ENCODE measurements at regions of chrX and their contacts with region 1.

Region 1: DNA sequence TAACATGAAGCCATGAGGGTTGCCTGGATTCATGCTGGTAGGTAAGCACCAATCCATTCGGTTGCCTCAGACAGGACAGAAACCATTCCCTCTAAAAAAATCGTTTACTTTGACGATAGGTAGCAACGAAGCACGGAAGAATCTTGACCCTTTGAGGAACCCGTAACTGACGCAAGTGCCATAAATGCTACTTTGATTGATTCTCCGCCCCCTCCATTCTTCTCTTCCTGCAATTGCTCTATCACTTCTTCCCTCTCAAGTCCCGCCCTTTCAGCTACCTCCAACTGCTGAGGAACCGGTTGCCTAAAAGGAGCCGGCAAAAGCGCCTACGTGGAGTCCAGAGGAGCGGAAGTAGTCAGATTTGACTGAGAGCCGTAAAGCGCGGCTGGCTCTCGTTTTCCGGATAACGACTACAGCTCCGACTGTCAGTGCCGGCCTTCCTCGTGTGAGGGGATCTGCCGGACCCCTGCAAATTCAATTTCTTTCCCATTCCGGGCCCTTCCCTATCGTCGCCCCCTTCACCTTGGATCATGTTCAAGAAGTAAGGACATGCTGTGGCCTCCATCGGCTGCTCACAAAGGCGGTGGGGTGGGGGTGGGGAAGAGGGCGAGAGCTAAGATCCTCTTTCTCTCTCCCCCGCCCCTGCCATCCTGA is at the start of gene MCTS1:
- DNase-seq: peak; percentile 94
- H3K4me3 ChIP-seq: peak within 1 kb of the TSS; percentile 76 to 83 (median 79)
- H3K27ac ChIP-seq: peak within 1 kb of the TSS; percentile 72
- H3K4me1 ChIP-seq: peaks cover 10% of the 10 kb centered on the region
- H3K27me3 ChIP-seq: no peaks in the 10 kb centered on the region
- CTCF ChIP-seq: no peak
- POLR2A ChIP-seq: no peak
- total RNA-seq, gene MCTS1: 63.2 and 70.0 TPM in 2 replicates

Region 2: DNA sequence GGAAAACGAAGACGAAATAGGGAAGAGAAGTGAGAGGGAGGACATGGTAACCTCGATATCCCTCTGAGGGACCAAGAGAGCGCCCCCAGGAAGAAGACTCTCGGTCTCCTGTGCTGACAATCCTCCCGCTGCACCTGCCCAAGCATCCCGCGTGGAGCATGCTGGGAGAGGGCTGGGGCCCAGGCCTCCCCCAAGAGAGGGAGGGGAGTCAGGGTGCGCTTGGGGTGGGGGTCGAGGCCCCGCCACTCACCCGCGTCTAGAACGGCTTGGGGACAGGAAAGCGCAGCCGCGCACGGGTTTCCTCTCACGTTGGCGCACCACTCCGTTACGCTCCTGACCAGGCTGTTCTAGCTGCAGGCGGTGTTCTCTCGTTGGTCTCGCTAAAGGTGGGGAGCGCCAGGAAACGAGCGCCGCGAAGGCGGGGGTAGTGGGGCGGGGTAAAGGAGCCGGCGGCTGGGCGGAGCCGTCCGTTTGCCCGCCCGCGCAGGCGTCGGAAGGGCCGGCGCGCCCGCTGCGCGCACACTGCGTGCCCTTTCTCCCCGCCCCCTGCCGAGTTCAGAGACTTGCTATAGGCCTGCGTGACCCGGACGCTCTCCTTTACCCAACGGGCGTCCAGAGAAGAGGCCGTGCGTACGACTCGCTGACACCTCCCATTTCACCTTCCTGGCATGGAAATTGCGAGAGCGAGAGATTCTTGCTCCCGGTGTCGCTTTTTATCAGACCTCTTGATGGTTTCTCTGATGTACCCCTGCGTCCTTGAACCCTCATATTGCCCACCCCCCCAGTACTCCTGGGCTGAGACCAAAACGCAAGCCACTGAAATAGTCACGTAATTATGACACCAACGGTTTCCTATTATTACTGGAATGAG is 26.1 kb after region 1 on chrX and contains the start of gene C1GALT1C1:
- CTCF ChIA-PET with region 1: no interaction called
- POLR2A ChIA-PET with region 1: interaction called, 3 read pairs
- dilution Hi-C with region 1: no loop called
- intact Hi-C with region 1: loop called (anchors 2 kb)
- DNase-seq: peak; percentile 93
- H3K4me3 ChIP-seq: peak within 1 kb of the TSS; percentile 62 to 89 (median 85)
- H3K27ac ChIP-seq: peak within 1 kb of the TSS; percentile 68
- H3K4me1 ChIP-seq: peaks cover 3% of the 10 kb centered on the region
- H3K27me3 ChIP-seq: no peaks in the 10 kb centered on the region
- CTCF ChIP-seq: no peak
- POLR2A ChIP-seq: peak; percentile 82
- total RNA-seq, gene C1GALT1C1: 32.9 and 34.6 TPM in 2 replicates

Region 3: DNA sequence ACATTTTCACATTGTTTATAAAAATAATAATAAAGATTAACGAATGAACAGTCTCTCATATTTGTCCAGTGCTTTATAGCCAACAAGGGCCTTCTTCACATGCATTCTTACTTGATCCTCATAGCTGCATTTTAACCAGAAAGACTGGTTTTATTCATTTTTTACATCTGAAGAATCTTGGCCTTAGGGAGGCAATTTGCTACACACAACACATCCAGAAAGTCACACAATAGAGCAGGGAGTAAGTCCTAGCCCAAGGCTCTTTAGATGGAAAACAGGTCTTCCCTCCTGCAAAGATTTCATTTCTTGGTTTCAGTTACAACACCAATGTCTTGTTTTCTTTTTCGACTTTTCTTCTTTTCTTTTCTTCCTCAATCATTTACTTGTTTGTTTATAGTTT is 39.0 kb after region 1 on chrX:
- CTCF ChIA-PET with region 1: no interaction called
- POLR2A ChIA-PET with region 1: no interaction called
- dilution Hi-C with region 1: no loop called
- intact Hi-C with region 1: no loop called
- DNase-seq: no peak
- H3K4me3 ChIP-seq: no peak overlapping the region
- H3K27ac ChIP-seq: no peak overlapping the region
- H3K4me1 ChIP-seq: peaks cover 9% of the 10 kb centered on the region
- H3K27me3 ChIP-seq: no peaks in the 10 kb centered on the region
- CTCF ChIP-seq: no peak
- POLR2A ChIP-seq: no peak

Measured in endothelial cell of umbilical vein (primary cell).